Panc1 (cell line): ENCODE measurements at regions of chr18 and their contacts with region 1.

Region 1: GRCh38 chr18:48842259-48843061 is 108.3 kb downstream of the SMAD7 start:
- DNase-seq: no peak
- ATAC-seq: peak; percentile 46
- H3K4me3 ChIP-seq: no peak overlapping the region
- H3K27ac ChIP-seq: peak overlapping the region; percentile 68
- H3K4me1 ChIP-seq: peaks cover 64% of the 10 kb centered on the region
- H3K27me3 ChIP-seq: no peaks in the 10 kb centered on the region
- CTCF ChIP-seq: no peak

Region 2: GRCh38 chr18:48922801-48923730 is 80.6 kb after region 1 on chr18:
- CTCF ChIA-PET with region 1: no interaction called
- POLR2A ChIA-PET with region 1: no interaction called
- in situ Hi-C with region 1: loop called (anchors 5 kb)
- intact Hi-C with region 1: no loop called
- DNase-seq: no peak
- ATAC-seq: peak; percentile 59
- H3K4me3 ChIP-seq: peak overlapping the region in 1 of 2 experiments; percentile 27; a peak in 2 of 4 replicates
- H3K27ac ChIP-seq: peak overlapping the region; percentile 67
- H3K4me1 ChIP-seq: peaks cover 71% of the 10 kb centered on the region
- H3K27me3 ChIP-seq: no peaks in the 10 kb centered on the region
- CTCF ChIP-seq: no peak